Endothelial cell of umbilical vein (primary cell): ENCODE measurements at regions of chr6 and their contacts with region 1.

Region 1: GRCh38 chr6:157764178-157765033 is 58.6 kb upstream of the SNX9 start:
- DNase-seq: peak; percentile 99
- H3K4me3 ChIP-seq: peak overlapping the region in 1 of 3 experiments; percentile 4
- H3K27ac ChIP-seq: peak overlapping the region; percentile 97
- H3K4me1 ChIP-seq: peaks cover 51% of the 10 kb centered on the region
- H3K27me3 ChIP-seq: no peaks in the 10 kb centered on the region
- CTCF ChIP-seq: no peak
- POLR2A ChIP-seq: no peak

Region 2: GRCh38 chr6:157597446-157598312 is 166.7 kb before region 1 on chr6:
- CTCF ChIA-PET with region 1: no interaction called
- POLR2A ChIA-PET with region 1: no interaction called
- dilution Hi-C with region 1: no loop called
- intact Hi-C with region 1: no loop called
- DNase-seq: peak; percentile 57
- H3K4me3 ChIP-seq: no peak overlapping the region
- H3K27ac ChIP-seq: no peak overlapping the region
- H3K4me1 ChIP-seq: no peaks in the 10 kb centered on the region
- H3K27me3 ChIP-seq: no peaks in the 10 kb centered on the region
- CTCF ChIP-seq: peak; percentile 50 to 68
- POLR2A ChIP-seq: no peak

Region 3: DNA sequence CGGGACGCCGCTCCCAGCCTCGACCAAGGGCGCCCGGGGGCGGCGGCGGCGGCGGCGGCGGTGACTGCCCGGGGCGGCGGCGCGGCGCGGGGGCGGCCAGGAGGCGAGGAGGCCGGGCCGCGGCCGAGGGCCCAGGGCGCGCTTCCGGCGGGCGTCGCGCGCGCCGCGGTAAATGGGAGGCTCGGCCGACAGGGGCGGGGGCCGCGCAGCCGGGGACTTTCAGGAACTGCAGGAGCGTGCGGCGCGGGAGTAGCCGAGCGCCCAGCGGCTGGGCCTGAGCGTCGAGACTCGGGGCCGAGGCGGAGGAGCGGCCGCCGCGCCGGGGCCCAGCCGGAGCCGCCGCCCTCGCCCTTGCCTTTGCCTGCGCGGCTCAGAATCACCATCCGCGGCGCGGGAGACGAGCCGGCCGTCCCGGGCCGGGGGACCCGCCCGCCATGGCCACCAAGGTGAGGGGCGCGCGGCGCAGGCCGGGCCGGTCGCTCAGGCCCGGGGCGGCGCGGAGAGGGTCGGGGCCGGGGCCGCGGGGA is 58.7 kb after region 1 on chr6 and contains the start of gene SNX9:
- CTCF ChIA-PET with region 1: no interaction called
- POLR2A ChIA-PET with region 1: no interaction called
- dilution Hi-C with region 1: no loop called
- intact Hi-C with region 1: loop called (anchors 1 kb)
- DNase-seq: peak; percentile 65
- H3K4me3 ChIP-seq: peak within 1 kb of the TSS; percentile 50 to 99 (median 89)
- H3K27ac ChIP-seq: peak within 1 kb of the TSS; percentile 86
- H3K4me1 ChIP-seq: peaks cover 32% of the 10 kb centered on the region
- H3K27me3 ChIP-seq: no peaks in the 10 kb centered on the region
- CTCF ChIP-seq: no peak
- POLR2A ChIP-seq: peak; percentile 55
- total RNA-seq, gene SNX9: 51.4 and 54.5 TPM in 2 replicates

Region 4: GRCh38 chr6:157867155-157867559 is 102.8 kb after region 1 on chr6:
- CTCF ChIA-PET with region 1: interaction called, 235 read pairs
- POLR2A ChIA-PET with region 1: no interaction called
- dilution Hi-C with region 1: no loop called
- intact Hi-C with region 1: loop called (anchors 1 kb)
- DNase-seq: peak; percentile 81
- H3K4me3 ChIP-seq: no peak overlapping the region
- H3K27ac ChIP-seq: peak overlapping the region; percentile 28
- H3K4me1 ChIP-seq: peaks cover 35% of the 10 kb centered on the region
- H3K27me3 ChIP-seq: no peaks in the 10 kb centered on the region
- CTCF ChIP-seq: no peak
- POLR2A ChIP-seq: no peak

Region 5: GRCh38 chr6:158060455-158061360 is 296.3 kb after region 1 on chr6:
- CTCF ChIA-PET with region 1: no interaction called
- POLR2A ChIA-PET with region 1: no interaction called
- dilution Hi-C with region 1: no loop called
- intact Hi-C with region 1: loop called (anchors 1 kb)
- DNase-seq: peak; percentile 92
- H3K4me3 ChIP-seq: no peak overlapping the region
- H3K27ac ChIP-seq: peak overlapping the region; percentile 99
- H3K4me1 ChIP-seq: peaks cover 62% of the 10 kb centered on the region
- H3K27me3 ChIP-seq: no peaks in the 10 kb centered on the region
- CTCF ChIP-seq: no peak
- POLR2A ChIP-seq: no peak